Dendritic cell treated with granulocyte-macrophage colony-stimulating factor and Interleukin-4, amounts not matched to agents 40 ng/mL and 50 ng/mL, for 4 days (primary cell): ENCODE measurements at regions of chr1 and their contacts with region 1.

Region 1: GRCh38 chr1:36420836-36421664 is 23.3 kb upstream of the LSM10 start:
- H3K4me3 Mint-ChIP-seq: no peak overlapping the region
- H3K27ac Mint-ChIP-seq: peak overlapping the region; percentile 30
- H3K4me1 Mint-ChIP-seq: peaks cover 9% of the 10 kb centered on the region
- H3K27me3 Mint-ChIP-seq: no peaks in the 10 kb centered on the region

Region 2: GRCh38 chr1:36323597-36324352 is 97.3 kb before region 1 on chr1 and contains the start of gene EVA1B:
- intact Hi-C with region 1: no loop called
- H3K4me3 Mint-ChIP-seq: peak within 1 kb of the TSS; percentile 72
- H3K27ac Mint-ChIP-seq: peak within 1 kb of the TSS; percentile 78
- H3K4me1 Mint-ChIP-seq: peaks cover 62% of the 10 kb centered on the region
- H3K27me3 Mint-ChIP-seq: peaks cover 40% of the 10 kb centered on the region

Region 3: GRCh38 chr1:36342481-36343478 is 78.3 kb before region 1 on chr1:
- intact Hi-C with region 1: loop called (anchors 1 kb)
- H3K4me3 Mint-ChIP-seq: no peak overlapping the region
- H3K27ac Mint-ChIP-seq: peak overlapping the region; percentile 35
- H3K4me1 Mint-ChIP-seq: peaks cover 57% of the 10 kb centered on the region
- H3K27me3 Mint-ChIP-seq: no peaks in the 10 kb centered on the region

Region 4: DNA sequence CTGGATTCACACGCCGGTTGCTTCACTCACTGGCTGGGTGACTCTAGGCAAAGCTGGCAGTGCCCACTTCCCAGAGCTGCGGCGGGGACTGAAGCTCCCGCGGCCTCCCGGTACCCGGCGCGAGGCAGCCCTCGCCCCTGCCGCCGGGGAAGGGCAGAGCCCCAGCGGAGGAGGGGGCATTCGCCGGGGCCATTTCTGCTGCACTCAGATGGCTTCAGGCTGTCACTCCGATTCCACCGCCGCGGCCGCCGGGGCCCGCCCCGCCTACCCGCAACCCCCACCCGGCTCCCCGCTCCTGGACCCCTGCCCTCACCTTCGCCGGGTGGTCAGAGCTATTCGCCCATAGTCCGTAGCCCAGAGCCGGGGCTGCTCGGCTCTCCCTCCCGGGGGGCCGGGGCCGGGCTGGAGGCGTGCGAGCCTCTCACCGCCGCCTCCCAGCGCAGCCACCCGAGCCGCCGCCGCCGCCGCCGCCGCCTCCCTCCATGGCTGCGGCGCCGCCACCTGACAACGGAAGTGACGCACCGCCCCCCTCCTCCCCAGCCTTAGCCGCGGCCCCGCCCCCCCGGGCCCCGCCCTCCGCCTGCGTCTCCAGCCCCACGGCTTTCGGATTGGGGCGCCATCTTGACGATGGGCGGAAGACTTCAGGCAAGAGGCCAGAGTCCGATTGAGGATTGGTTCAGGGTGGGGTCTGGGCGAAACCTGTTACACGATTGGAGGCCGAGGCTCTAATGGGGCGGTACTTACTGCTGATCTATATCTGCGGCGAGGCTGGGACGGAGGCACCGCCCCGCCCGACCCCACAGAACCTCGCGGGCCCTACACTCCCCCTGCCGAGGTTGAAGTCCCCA is 35.4 kb before region 1 on chr1 and contains the start of gene STK40:
- intact Hi-C with region 1: loop called (anchors 5 kb)
- H3K4me3 Mint-ChIP-seq: peak within 1 kb of the TSS; percentile 78
- H3K27ac Mint-ChIP-seq: peak within 1 kb of the TSS; percentile 100
- H3K4me1 Mint-ChIP-seq: peaks cover 74% of the 10 kb centered on the region
- H3K27me3 Mint-ChIP-seq: no peaks in the 10 kb centered on the region

Region 5: DNA sequence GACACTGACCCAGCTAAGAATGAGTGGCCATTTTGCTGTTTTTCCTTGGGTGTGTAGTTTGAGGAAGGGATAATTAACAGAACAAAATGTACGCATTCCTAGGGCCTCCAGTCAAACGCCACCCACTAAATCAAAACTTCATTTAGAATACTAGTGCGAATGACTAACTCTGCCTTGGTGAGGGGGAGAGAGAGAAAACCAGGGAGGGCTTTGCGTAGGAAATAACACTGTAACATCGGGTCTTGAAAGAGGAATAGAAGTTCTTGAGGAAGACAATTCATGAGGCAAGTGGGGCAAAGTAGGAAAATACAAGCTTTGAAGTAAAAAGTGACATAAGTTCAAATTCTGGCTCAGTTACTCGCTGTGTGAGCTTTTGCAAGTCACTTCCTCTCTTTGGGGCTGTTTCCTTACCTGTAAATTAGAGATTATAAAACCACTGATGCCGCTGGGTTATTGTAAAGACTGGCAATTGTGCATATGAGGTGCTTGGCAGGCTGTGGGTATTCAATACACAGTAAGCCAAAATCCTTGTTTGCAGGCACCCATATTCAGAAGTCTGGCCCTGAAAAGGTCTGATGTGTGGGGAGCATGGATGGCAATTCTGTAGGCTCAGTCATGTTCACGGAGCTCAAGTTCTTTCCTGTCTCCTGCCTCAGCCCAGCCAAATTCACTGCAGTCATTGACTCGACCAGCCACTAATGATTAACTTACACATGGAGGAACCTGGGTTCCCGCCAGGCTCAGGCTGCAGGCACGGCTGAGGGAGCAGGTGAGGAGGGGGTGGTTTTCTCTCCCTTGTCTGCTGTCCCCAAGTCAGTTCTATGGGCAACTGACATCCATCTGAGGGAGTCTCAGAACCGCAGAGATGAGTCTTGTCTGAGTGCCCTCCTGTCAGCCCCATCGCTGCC is 201.9 kb after region 1 on chr1:
- intact Hi-C with region 1: no loop called
- H3K4me3 Mint-ChIP-seq: no peak overlapping the region
- H3K27ac Mint-ChIP-seq: no peak overlapping the region
- H3K4me1 Mint-ChIP-seq: no peaks in the 10 kb centered on the region
- H3K27me3 Mint-ChIP-seq: peaks cover 15% of the 10 kb centered on the region